ENCODE measurements at regions of chr3 and their contacts with region 1.

Region 1: GRCh38 chr3:113721636-113722035 is 24.4 kb downstream of the NAA50 start:
- DNase-seq: peak; percentile 32 to 79 (median 74)
- H3K4me3 ChIP-seq: peak overlapping the region in 2 of 7 experiments; percentile 28 to 36
- H3K27ac ChIP-seq: peak overlapping the region in 1 of 2 experiments; percentile 45
- H3K4me1 ChIP-seq: peaks cover 9 to 23% (median 14%) of the 10 kb centered on the region in 4 experiments
- H3K27me3 ChIP-seq: no peaks in the 10 kb centered on the region

Region 2: DNA sequence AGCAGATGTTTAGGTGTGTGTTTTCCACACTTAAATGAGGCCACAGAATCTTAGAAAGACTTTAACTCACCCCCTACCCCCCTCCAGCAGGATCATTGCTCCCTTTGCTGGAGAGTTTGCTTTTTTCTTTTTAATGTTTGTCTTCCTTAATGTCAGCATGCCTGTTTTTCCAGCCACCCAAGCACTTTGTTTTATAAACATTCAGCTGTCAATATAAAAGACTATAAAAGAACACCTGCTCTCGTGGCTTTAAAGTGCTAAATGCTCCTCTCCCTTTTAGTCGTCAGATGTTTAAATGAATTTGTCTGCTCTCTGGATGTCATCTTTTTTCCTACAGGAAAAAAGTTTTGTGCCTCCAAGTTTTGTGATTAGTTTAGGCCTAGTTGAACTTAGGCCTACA is 127.6 kb before region 1 on chr3:
- CTCF ChIA-PET with region 1: no interaction called
- POLR2A ChIA-PET with region 1: no interaction called
- DNase-seq: no peak
- H3K4me3 ChIP-seq: no peak overlapping the region
- H3K27ac ChIP-seq: no peak overlapping the region
- H3K4me1 ChIP-seq: no peaks in the 10 kb centered on the region
- H3K27me3 ChIP-seq: no peaks in the 10 kb centered on the region

Region 3: DNA sequence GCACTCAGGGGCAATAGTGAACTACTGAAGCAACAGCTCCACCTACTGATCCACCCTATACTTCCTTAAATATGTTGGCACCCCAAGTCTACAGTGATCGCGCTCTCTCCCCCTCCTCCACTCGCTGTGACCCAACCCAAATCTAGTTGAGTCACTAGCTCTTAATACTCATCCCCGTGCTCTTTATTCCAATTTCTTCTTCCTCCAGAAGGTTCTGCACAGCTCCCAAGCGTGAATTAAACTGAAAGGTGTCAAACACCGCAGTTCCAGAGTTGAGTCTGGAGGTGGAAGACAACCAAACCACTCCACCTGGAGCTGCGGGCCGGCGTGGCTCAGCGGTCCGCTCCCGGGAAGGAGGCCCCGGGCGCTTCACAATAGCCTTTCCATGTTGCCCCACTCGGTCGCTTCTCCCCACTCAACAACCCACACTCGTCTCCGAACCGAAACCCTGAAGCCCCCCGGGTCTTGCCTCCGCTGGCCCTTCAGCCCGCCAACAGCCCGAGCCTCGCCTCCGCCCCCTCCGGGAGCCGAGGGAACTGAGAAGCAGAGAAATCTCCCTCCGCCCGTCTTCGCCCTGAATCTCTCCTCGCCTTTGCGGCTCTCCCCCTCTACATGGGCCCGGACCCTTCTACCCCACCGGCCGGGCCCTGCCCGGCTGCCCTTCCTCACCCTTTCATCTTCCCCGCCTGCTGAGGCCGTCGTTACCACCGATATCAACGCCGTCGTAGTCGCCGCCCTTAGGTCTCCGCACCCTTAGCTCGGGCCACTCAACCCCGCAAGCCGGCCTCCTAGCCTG is 23.8 kb after region 1 on chr3:
- CTCF ChIA-PET with region 1: interaction called, 13 read pairs
- POLR2A ChIA-PET with region 1: no interaction called
- DNase-seq: peak; percentile 93 to 96 (median 95)
- H3K4me3 ChIP-seq: peak overlapping the region; percentile 68 to 100 (median 93)
- H3K27ac ChIP-seq: peak overlapping the region; percentile 97 to 100
- H3K4me1 ChIP-seq: peaks cover 35 to 77% (median 49%) of the 10 kb centered on the region in 4 experiments
- H3K27me3 ChIP-seq: no peaks in the 10 kb centered on the region